Activated CD8-positive, alpha-beta T cell treated with anti-CD3 and anti-CD28 coated beads for 36 hours (primary cell): ENCODE measurements at regions of chr5 and their contacts with region 1.

Region 1: DNA sequence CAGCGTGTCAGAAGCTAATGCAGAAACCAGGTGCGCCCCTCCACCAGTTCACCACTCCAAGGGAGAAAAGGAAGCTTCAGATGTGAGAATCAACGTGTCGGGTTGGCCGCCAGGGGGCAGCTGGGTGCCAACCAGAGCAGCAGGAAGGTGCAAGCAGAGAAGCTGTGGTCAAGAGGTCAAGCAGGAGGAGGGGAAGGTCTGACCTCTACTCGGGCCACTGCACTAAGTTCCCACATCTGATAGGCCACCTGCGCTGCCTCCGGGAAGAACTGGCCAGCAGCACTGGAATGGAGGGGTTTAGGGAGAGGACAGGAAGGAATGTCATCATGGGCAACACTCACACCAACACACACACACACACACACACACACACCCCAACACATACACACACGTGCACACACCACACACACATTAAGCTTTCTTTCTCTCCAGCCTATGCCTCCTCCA is 31.4 kb downstream of the ANXA6 start:
- DNase-seq: peak; percentile 79
- ATAC-seq: peak; percentile 27
- H3K4me3 Mint-ChIP-seq: peak overlapping the region; percentile 18
- H3K27ac Mint-ChIP-seq: peak overlapping the region; percentile 96
- H3K4me1 Mint-ChIP-seq: peaks cover 73% of the 10 kb centered on the region
- H3K27me3 Mint-ChIP-seq: no peaks in the 10 kb centered on the region
- CTCF ChIP-seq: peak; percentile 90

Region 2: DNA sequence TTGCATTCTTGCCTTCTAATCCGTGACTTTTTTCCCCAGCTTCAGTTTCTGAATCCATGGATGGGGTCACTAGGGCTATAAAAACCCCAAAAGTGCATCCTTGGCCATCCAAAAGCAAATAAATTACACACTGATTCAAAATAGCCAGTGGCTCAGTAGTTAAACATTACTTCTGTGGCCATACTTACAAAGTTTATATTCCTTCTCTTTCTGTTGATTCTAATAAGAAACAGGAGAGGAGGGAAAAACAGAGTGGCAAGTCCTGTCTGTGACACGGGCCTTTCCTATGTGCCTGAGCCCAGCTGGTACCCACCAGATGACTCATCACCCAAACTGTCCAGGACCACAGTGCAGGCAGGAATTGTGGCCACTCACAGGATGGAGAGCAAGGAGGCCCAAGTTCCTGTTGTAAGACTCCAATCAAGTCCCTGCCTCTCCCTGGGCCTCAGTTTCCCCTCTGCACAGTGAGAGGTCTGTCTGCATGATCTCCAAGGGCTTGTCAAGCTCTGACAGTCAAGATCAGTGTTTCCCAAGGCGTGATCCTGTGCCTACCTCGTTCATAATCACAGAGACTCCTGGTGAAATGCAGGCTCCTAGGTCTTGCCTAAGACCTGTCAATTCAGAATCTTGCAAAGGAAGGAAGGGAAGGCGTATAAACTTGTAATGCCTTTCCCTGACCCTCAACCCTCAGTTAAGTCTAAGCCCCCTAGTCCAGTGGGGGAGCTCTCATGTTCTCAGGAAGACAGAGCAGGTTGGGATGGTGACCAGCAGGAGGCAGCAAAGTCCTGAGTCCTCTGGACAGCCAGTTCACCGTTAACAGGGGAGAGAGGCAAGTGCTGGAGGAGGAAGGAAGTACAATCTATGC is 74.9 kb before region 1 on chr5:
- CTCF ChIA-PET with region 1: interaction called, 22 read pairs
- POLR2A ChIA-PET with region 1: interaction called, 5 read pairs
- intact Hi-C with region 1: no loop called
- DNase-seq: peak; percentile 88
- ATAC-seq: peak; percentile 83
- H3K4me3 Mint-ChIP-seq: no peak overlapping the region
- H3K27ac Mint-ChIP-seq: peak overlapping the region; percentile 36
- H3K4me1 Mint-ChIP-seq: peaks cover 12% of the 10 kb centered on the region
- H3K27me3 Mint-ChIP-seq: no peaks in the 10 kb centered on the region
- CTCF ChIP-seq: peak; percentile 75

Region 3: DNA sequence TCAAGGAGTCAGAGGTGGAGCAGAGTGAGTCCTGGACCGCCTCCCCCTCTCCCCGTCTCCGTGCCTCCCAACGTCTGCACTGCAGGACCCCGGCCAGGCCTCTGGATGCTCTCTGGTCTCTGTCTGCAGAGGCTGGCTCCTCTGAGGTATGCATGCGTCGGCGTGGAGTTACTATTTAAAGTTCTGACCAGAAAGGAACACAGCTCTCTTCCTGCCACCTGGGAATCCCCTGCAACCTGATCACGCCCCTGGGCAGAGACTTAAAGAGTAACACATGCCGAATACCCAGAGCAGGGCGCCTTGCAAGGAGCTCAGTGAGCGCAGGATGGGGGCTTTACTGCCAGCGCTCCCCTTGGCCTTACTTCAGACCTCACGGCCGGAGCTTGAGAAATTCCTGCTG is 15.3 kb after region 1 on chr5:
- CTCF ChIA-PET with region 1: interaction called, 149 read pairs
- POLR2A ChIA-PET with region 1: interaction called, 6 read pairs
- intact Hi-C with region 1: no loop called
- DNase-seq: peak; percentile 90
- ATAC-seq: peak; percentile 91
- H3K4me3 Mint-ChIP-seq: peak overlapping the region; percentile 73
- H3K27ac Mint-ChIP-seq: peak overlapping the region; percentile 86
- H3K4me1 Mint-ChIP-seq: peaks cover 88% of the 10 kb centered on the region
- H3K27me3 Mint-ChIP-seq: no peaks in the 10 kb centered on the region
- CTCF ChIP-seq: no peak

Region 4: GRCh38 chr5:151157426-151158286 is 31.4 kb after region 1 on chr5 and contains the start of gene ANXA6:
- CTCF ChIA-PET with region 1: interaction called, 413 read pairs
- POLR2A ChIA-PET with region 1: interaction called, 16 read pairs
- intact Hi-C with region 1: no loop called
- DNase-seq: peak; percentile 76
- ATAC-seq: peak; percentile 53
- H3K4me3 Mint-ChIP-seq: peak within 1 kb of the TSS; percentile 95
- H3K27ac Mint-ChIP-seq: peak within 1 kb of the TSS; percentile 89
- H3K4me1 Mint-ChIP-seq: peaks cover 40% of the 10 kb centered on the region
- H3K27me3 Mint-ChIP-seq: no peaks in the 10 kb centered on the region
- CTCF ChIP-seq: no peak
- total RNA-seq, gene ANXA6: 328 to 336 TPM

Region 5: GRCh38 chr5:151173711-151174611 is 47.7 kb after region 1 on chr5:
- CTCF ChIA-PET with region 1: interaction called, 413 read pairs
- POLR2A ChIA-PET with region 1: no interaction called
- intact Hi-C with region 1: no loop called
- DNase-seq: no peak
- ATAC-seq: no peak
- H3K4me3 Mint-ChIP-seq: no peak overlapping the region
- H3K27ac Mint-ChIP-seq: no peak overlapping the region
- H3K4me1 Mint-ChIP-seq: peaks cover 18% of the 10 kb centered on the region
- H3K27me3 Mint-ChIP-seq: no peaks in the 10 kb centered on the region
- CTCF ChIP-seq: no peak

Region 6: DNA sequence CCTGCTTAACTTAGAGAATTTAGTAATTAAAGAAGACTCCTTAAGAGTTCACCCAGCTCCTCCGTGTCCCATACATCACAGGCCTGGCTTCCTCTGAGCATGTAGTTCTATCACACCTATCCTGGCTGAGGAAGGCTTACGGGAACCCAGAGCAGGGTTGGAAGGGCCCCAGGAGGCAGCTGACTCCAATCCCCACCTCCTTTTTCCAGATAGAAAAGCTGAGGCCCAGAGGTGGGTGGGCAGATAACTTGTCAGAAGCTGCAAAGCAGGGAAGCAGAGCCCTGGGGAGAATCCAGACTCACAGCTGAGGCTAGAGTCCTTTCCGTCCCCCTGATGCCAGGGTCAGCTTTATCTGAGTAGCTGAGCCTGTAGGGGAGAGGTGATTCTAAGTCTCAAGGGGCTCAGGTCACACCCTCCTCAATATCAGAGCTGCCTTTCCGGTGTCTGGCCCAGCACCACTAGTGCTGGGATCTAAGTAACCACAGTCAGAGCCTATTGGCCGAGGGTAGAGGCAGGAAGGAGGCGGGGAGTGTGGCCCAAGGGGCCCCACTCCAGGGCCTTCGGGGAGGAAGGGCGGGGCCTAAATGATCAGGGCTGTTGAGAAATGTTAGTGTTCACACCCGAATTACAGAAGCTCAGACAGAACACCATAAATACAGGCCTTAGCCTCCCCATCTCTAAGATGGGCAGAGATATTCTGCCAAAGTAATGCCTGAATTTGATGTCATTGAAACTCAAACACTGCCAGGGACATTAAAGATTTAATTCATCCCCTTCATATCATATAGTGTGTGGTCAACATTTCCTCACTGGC is 87.8 kb after region 1 on chr5:
- CTCF ChIA-PET with region 1: interaction called, 26 read pairs
- POLR2A ChIA-PET with region 1: no interaction called
- intact Hi-C with region 1: no loop called
- DNase-seq: peak; percentile 94
- ATAC-seq: peak; percentile 86
- H3K4me3 Mint-ChIP-seq: peak overlapping the region; percentile 88
- H3K27ac Mint-ChIP-seq: peak overlapping the region; percentile 99
- H3K4me1 Mint-ChIP-seq: peaks cover 75% of the 10 kb centered on the region
- H3K27me3 Mint-ChIP-seq: no peaks in the 10 kb centered on the region
- CTCF ChIP-seq: no peak

Region 7: DNA sequence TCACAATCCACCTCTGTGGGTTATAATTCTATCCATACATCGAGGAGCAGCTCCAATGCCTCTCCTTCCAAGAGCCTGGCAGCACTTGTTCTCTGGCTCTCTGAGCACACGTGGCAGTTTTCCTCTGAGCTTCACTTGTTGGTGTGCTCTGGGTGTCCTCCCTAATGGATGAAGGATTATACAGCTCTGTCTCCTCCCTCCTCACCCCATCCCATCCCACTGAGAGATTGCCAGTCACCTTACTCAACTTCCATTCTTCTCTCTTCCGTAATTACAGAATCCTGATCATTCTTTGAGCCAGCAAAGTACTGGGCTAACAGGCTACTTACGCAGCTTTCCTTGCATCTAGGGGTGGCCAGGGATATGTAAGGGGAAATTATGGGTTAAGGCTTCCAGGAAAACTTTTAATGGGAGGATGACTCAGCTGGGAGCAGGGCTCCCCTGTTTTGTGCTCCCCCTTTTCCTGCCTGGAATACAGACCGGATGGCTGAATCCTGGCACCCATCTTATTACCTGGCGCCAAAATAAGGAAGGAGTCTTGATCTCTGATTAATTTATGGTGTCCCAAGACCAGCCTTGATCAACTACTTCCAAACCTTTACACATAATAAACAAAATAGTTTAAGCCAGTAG is 103.9 kb after region 1 on chr5:
- CTCF ChIA-PET with region 1: interaction called, 11 read pairs
- POLR2A ChIA-PET with region 1: no interaction called
- intact Hi-C with region 1: no loop called
- DNase-seq: no peak
- ATAC-seq: no peak
- H3K4me3 Mint-ChIP-seq: no peak overlapping the region
- H3K27ac Mint-ChIP-seq: no peak overlapping the region
- H3K4me1 Mint-ChIP-seq: peaks cover 20% of the 10 kb centered on the region
- H3K27me3 Mint-ChIP-seq: no peaks in the 10 kb centered on the region
- CTCF ChIP-seq: no peak